Naive thymus-derived CD4-positive, alpha-beta T cell (primary cell): ENCODE measurements at regions of chr17 and their contacts with region 1.

Region 1: DNA sequence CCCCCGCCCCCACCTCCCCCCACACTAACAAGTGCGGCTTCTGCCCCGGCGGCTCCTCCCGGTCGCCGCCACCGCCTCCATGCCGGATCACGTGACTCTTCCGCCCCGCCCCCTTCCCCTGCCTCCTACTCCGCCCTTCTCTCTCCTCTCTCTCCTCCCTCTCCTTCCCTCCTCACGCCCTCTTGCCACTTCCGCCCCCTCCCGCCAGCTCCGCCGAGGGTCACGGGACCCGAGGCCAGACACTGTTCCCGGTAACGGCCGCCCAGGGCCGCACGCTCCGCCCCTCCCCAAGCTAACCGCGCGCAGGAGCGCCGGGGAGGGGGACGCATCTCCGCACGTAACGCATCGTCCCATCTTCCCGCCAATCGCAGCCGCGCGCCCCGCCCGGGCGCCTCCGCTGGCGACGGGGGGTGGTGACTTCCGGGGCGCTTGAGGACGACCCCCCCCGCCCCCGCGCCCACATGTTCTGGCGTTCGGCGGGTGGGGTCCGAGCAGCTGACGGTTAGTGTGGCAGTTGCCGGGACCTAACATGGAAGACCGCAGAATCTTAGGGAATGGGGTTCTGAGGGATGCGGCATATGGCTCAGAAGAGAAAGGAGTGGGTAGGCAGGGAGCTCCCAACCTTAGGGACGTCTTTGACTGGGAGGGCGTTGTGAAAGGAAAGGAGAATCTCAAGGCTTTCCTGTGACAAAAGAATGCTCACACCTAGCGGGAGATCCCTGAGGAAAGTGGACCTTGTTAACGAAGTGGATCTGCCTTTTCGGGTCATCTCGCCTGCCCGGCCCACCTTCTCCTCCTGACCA is at the start of gene USP32:
- DNase-seq: peak; percentile 94 to 98 (median 96)
- ATAC-seq: peak; percentile 95
- H3K4me3 ChIP-seq: peak within 1 kb of the TSS; percentile 97
- H3K4me3 Mint-ChIP-seq: peak within 1 kb of the TSS; percentile 93 to 99 (median 96)
- H3K27ac ChIP-seq: peak within 1 kb of the TSS; percentile 92
- H3K27ac Mint-ChIP-seq: peak within 1 kb of the TSS; percentile 92 to 99 (median 97)
- H3K4me1 ChIP-seq: peaks cover 5 to 18% of the 10 kb centered on the region in 2 donors
- H3K4me1 Mint-ChIP-seq: peaks cover 30 to 55% (median 41%) of the 10 kb centered on the region in 7 donors
- H3K27me3 ChIP-seq: no peaks in the 10 kb centered on the region
- H3K27me3 Mint-ChIP-seq: no peaks in the 10 kb centered on the region
- total RNA-seq, gene USP32: 31.6 to 58.1 (median 35.4) TPM

Region 2: DNA sequence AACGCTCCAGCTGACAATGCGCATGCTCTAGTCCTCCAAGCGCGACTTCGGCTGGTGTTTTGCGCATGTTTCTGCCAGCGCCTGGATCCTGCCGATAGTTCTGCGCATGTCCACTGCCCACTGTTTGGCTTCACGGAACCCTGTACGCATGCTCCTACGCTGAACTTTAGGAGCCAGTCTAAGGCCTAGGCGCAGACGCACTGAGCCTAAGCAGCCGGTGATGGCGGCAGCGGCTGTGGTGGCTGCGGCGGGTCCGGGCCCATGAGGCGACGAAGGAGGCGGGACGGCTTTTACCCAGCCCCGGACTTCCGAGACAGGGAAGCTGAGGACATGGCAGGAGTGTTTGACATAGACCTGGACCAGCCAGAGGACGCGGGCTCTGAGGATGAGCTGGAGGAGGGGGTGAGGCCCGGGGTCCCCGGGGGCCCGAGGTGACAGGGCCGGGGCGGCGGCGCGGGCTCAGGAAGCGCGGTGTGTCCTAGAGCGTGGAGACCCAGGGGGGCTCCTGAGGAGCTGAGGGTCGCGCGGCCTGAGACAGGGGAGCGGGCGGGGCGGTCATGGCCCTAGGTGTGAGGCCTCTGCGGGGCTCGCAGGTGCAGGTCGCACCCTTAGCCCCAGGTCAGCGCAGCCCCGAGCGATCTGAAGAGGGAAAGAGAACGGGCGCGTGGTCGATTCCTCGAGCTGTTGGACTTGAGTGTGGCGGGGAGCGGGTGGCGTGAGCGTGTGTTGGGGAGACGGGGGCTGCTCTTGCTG is 499.1 kb before region 1 on chr17 and contains the starts of genes RPS6KB1 and TUBD1:
- CTCF ChIA-PET with region 1: no interaction called
- POLR2A ChIA-PET with region 1: no interaction called
- intact Hi-C with region 1: loop called in 1 of 2 experiments (anchors 2 kb)
- DNase-seq: peak; percentile 87 to 99 (median 98)
- ATAC-seq: peak; percentile 96
- H3K4me3 ChIP-seq: peak within 1 kb of the TSS; percentile 74
- H3K4me3 Mint-ChIP-seq: peak within 1 kb of the TSS; percentile 97 to 100 (median 99)
- H3K27ac ChIP-seq: peak within 1 kb of the TSS; percentile 93
- H3K27ac Mint-ChIP-seq: peak within 1 kb of the TSS; percentile 98 to 100 (median 100)
- H3K4me1 ChIP-seq: peaks cover 13 to 23% of the 10 kb centered on the region in 2 donors
- H3K4me1 Mint-ChIP-seq: peaks cover 43 to 83% (median 67%) of the 10 kb centered on the region in 7 donors
- H3K27me3 ChIP-seq: no peaks in the 10 kb centered on the region
- H3K27me3 Mint-ChIP-seq: peaks cover 0 to 4% (median 0%) of the 10 kb centered on the region in 5 donors
- total RNA-seq, gene RPS6KB1: 62.0 to 107 (median 71.5) TPM
- total RNA-seq, gene TUBD1: 8.2 to 42.1 (median 14.3) TPM

Region 3: GRCh38 chr17:60077672-60078519 is 314.3 kb before region 1 on chr17:
- CTCF ChIA-PET with region 1: no interaction called
- POLR2A ChIA-PET with region 1: no interaction called
- intact Hi-C with region 1: loop called in 1 of 2 experiments (anchors 1 kb)
- DNase-seq: peak in 5 of 9 donors; percentile 30 to 41 (median 35)
- ATAC-seq: peak; percentile 66
- H3K4me3 ChIP-seq: peak overlapping the region; percentile 82
- H3K4me3 Mint-ChIP-seq: peak overlapping the region; percentile 86 to 97 (median 94)
- H3K27ac ChIP-seq: peak overlapping the region; percentile 70
- H3K27ac Mint-ChIP-seq: peak overlapping the region; percentile 82 to 97 (median 87)
- H3K4me1 ChIP-seq: peaks cover 8 to 14% of the 10 kb centered on the region in 2 donors
- H3K4me1 Mint-ChIP-seq: peaks cover 17 to 41% (median 28%) of the 10 kb centered on the region in 7 donors
- H3K27me3 ChIP-seq: no peaks in the 10 kb centered on the region
- H3K27me3 Mint-ChIP-seq: no peaks in the 10 kb centered on the region

Region 4: DNA sequence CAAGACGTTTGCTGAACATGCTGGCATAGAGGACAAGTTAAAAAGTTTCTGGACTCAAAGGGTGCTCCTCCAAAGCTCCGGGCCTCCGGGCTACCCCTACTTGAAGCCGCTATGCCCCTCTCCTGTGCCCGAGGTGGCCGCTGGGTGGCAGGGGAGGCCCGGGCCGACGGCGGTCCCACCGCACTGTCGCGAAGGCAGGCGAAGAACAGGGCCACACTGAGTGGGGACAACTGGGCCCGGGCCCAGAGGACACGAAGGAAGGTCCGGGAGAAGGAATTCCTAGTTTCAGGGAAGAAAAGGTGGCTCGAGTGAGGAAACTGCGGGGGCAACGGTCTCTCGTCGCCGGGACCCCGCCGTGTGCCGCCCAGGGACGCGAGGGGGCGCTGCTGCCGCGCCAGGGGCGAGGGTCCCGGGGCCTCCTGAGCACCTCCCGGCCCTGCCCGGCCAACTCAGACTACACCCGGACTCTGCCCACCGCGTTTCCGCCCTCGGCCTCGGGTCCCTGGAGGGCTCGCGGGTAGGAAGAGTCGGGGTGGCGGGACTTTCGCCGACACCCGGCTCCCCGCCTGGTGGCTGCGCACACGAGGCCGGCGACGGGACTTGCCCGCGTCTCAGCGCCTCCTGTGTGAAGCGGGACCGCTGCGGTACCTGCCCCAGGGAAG is 29.2 kb after region 1 on chr17:
- CTCF ChIA-PET with region 1: interaction called, 3 read pairs
- POLR2A ChIA-PET with region 1: interaction called, 4 read pairs
- intact Hi-C with region 1: loop called (anchors 1 kb)
- DNase-seq: peak; percentile 52 to 77 (median 68)
- ATAC-seq: peak; percentile 95
- H3K4me3 ChIP-seq: peak overlapping the region; percentile 63
- H3K4me3 Mint-ChIP-seq: peak overlapping the region; percentile 59 to 88 (median 80)
- H3K27ac ChIP-seq: peak overlapping the region; percentile 38
- H3K27ac Mint-ChIP-seq: peak overlapping the region in 8 of 9 donors; percentile 17 to 82 (median 76)
- H3K4me1 ChIP-seq: peaks cover 4% of the 10 kb centered on the region in 2 donors
- H3K4me1 Mint-ChIP-seq: peaks cover 0 to 11% (median 10%) of the 10 kb centered on the region in 7 donors
- H3K27me3 ChIP-seq: no peaks in the 10 kb centered on the region
- H3K27me3 Mint-ChIP-seq: peaks cover 0 to 7% (median 0%) of the 10 kb centered on the region in 5 donors

Region 5: GRCh38 chr17:60599620-60600489 is 207.6 kb after region 1 on chr17 and contains the start of gene PPM1D:
- CTCF ChIA-PET with region 1: no interaction called
- POLR2A ChIA-PET with region 1: no interaction called
- intact Hi-C with region 1: loop called (anchors 1 kb)
- DNase-seq: peak; percentile 92 to 97 (median 95)
- ATAC-seq: peak; percentile 97
- H3K4me3 ChIP-seq: peak within 1 kb of the TSS; percentile 70
- H3K4me3 Mint-ChIP-seq: peak within 1 kb of the TSS; percentile 93 to 99 (median 97)
- H3K27ac ChIP-seq: peak within 1 kb of the TSS; percentile 88
- H3K27ac Mint-ChIP-seq: peak within 1 kb of the TSS; percentile 91 to 99 (median 95)
- H3K4me1 ChIP-seq: peaks cover 0 to 13% of the 10 kb centered on the region in 2 donors
- H3K4me1 Mint-ChIP-seq: peaks cover 33 to 55% (median 43%) of the 10 kb centered on the region in 7 donors
- H3K27me3 ChIP-seq: no peaks in the 10 kb centered on the region
- H3K27me3 Mint-ChIP-seq: no peaks in the 10 kb centered on the region
- total RNA-seq, gene PPM1D: 13.5 to 18.8 (median 17.7) TPM